IMR-90 (cell line): ENCODE measurements at regions of chr5 and their contacts with region 1.

Region 1: GRCh38 chr5:126536874-126537273 is 58.1 kb downstream of the ALDH7A1 start:
- DNase-seq: no peak
- ATAC-seq: no peak
- H3K4me3 ChIP-seq: no peak overlapping the region
- H3K27ac ChIP-seq: no peak overlapping the region
- H3K4me1 ChIP-seq: peaks cover 8% of the 10 kb centered on the region
- H3K27me3 ChIP-seq: no peaks in the 10 kb centered on the region
- CTCF ChIP-seq: peak; percentile 5; the same call in 1 of the 2 replicates
- POLR2A ChIP-seq: no peak
- RAD21 ChIP-seq: no peak

Region 2: GRCh38 chr5:125987677-125988255 is 549.1 kb before region 1 on chr5:
- CTCF ChIA-PET with region 1: no interaction called
- POLR2A ChIA-PET with region 1: no interaction called
- dilution Hi-C with region 1: no loop called
- in situ Hi-C with region 1: no loop called
- intact Hi-C with region 1: loop called (anchors 5 kb)
- DNase-seq: no peak
- ATAC-seq: no peak
- H3K4me3 ChIP-seq: no peak overlapping the region
- H3K27ac ChIP-seq: no peak overlapping the region
- H3K4me1 ChIP-seq: no peaks in the 10 kb centered on the region
- H3K27me3 ChIP-seq: no peaks in the 10 kb centered on the region
- CTCF ChIP-seq: no peak
- POLR2A ChIP-seq: no peak
- RAD21 ChIP-seq: no peak

Region 3: GRCh38 chr5:126348855-126349635 is 187.8 kb before region 1 on chr5:
- CTCF ChIA-PET with region 1: interaction called, 13 read pairs
- POLR2A ChIA-PET with region 1: no interaction called
- dilution Hi-C with region 1: loop called (anchors 10 kb)
- in situ Hi-C with region 1: loop called (anchors 5 kb)
- intact Hi-C with region 1: loop called (anchors 1 kb)
- DNase-seq: peak; percentile 54
- ATAC-seq: peak; percentile 76
- H3K4me3 ChIP-seq: no peak overlapping the region
- H3K27ac ChIP-seq: no peak overlapping the region
- H3K4me1 ChIP-seq: peaks cover 13% of the 10 kb centered on the region
- H3K27me3 ChIP-seq: no peaks in the 10 kb centered on the region
- CTCF ChIP-seq: no peak
- POLR2A ChIP-seq: no peak
- RAD21 ChIP-seq: no peak

Region 4: GRCh38 chr5:126422989-126423788 is 113.7 kb before region 1 on chr5 and contains the start of gene GRAMD2B:
- CTCF ChIA-PET with region 1: no interaction called
- POLR2A ChIA-PET with region 1: no interaction called
- dilution Hi-C with region 1: no loop called
- in situ Hi-C with region 1: no loop called
- intact Hi-C with region 1: loop called (anchors 2 kb)
- DNase-seq: peak; percentile 88
- ATAC-seq: peak; percentile 98
- H3K4me3 ChIP-seq: peak within 1 kb of the TSS; percentile 90
- H3K27ac ChIP-seq: peak within 1 kb of the TSS; percentile 90
- H3K4me1 ChIP-seq: peaks cover 3% of the 10 kb centered on the region; the same call in 1 of the 2 replicates
- H3K27me3 ChIP-seq: no peaks in the 10 kb centered on the region
- CTCF ChIP-seq: no peak
- POLR2A ChIP-seq: peak; percentile 84
- RAD21 ChIP-seq: peak; percentile 24
- total RNA-seq, gene GRAMD2B: 15.8 and 20.3 TPM in 2 replicates

Region 5: DNA sequence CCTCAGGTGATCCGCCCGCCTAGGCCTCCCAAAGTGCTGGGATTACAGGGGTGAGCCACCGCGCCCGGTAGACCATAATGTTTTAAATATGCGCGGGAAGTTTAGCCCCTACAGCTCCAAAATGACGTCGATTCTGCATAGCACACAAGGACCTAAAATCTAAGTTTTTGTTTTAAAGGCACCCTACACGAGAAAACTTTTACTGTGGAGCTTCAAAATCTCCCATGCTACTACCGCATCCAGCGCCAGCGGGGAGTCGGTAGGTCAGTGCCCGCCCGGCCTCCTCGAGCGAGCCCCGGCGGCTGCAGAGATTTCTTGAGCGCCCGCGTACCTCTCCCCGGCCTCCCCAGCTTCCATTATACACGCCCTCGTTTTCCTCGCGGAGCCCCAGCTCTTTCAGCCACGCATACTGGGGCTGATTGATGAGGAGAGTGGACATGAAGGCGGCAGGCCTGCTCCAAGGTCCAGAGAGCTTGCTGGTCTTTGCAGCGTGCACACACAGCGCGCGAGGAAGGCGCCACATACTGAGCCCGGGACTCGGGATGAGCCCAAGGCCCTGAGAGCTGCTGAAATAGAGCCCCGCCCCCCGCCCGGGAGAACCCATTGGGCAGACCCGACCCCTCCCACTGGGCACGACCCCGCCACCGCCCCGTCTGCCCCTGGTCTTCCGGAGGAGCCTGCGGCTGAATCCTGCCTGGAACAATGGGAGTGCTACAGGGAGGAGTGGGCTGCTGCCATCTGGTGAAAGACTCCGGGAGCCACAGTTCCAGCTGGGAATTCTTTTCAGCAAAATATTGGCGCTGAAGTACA is 58.0 kb after region 1 on chr5 and contains the start of gene ALDH7A1:
- CTCF ChIA-PET with region 1: no interaction called
- POLR2A ChIA-PET with region 1: no interaction called
- dilution Hi-C with region 1: no loop called
- in situ Hi-C with region 1: no loop called
- intact Hi-C with region 1: loop called (anchors 2 kb)
- DNase-seq: no peak
- ATAC-seq: peak; percentile 96
- H3K4me3 ChIP-seq: peak within 1 kb of the TSS; percentile 69
- H3K27ac ChIP-seq: peak within 1 kb of the TSS; percentile 70
- H3K4me1 ChIP-seq: peaks cover 4% of the 10 kb centered on the region
- H3K27me3 ChIP-seq: no peaks in the 10 kb centered on the region
- CTCF ChIP-seq: peak; percentile 56
- POLR2A ChIP-seq: peak; percentile 67
- RAD21 ChIP-seq: peak; percentile 50
- total RNA-seq, gene ALDH7A1: 40.9 and 43.9 TPM in 2 replicates